Motor neuron (in vitro differentiated cells): ENCODE measurements at regions of chr5 and their contacts with region 1.

Region 1: GRCh38 chr5:116068028-116068632 is 16.7 kb upstream of the COMMD10 start:
- ATAC-seq: peak in 3 of 8 experiments; percentile 41 to 74 (median 49)
- H3K4me3 ChIP-seq: no peak overlapping the region
- H3K27ac ChIP-seq: no peak overlapping the region
- H3K4me1 ChIP-seq: no peaks in the 10 kb centered on the region

Region 2: GRCh38 chr5:115657881-115658233 is 410.3 kb before region 1 on chr5:
- in situ Hi-C with region 1: loop called in 1 of 9 experiments (anchors 25 kb)
- ATAC-seq: peak in 2 of 8 experiments; percentile 94 to 97
- H3K4me3 ChIP-seq: no peak overlapping the region
- H3K27ac ChIP-seq: no peak overlapping the region
- H3K4me1 ChIP-seq: peaks cover 3 to 4% of the 10 kb centered on the region in 2 donors

Region 3: DNA sequence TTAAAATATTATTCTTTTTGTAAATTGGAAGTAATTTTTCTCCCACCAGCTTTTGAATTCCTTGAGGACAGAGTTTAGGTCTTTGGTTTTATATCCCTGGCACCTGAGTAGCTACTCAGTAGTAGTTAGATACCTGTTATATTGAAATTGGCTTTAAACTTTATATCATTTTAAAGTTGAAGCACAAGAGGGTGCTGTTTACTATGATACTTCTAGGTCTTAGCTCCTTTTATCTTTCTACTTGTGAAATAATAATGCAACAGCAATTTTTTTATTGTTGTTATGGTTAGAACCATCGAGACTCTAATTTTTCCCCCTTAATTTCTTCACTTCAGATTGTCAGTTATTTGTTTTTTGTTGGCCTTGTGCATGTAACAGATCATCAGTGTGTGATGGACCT is 180.1 kb before region 1 on chr5:
- in situ Hi-C with region 1: loop called in 2 of 9 experiments (anchors 25 kb)
- ATAC-seq: peak in 2 of 8 experiments; percentile 26 to 33
- H3K4me3 ChIP-seq: no peak overlapping the region
- H3K27ac ChIP-seq: no peak overlapping the region
- H3K4me1 ChIP-seq: no peaks in the 10 kb centered on the region